SK-N-SH (cell line): ENCODE measurements at regions of chr9 and their contacts with region 1.

Region 1: GRCh38 chr9:136225748-136226679 is 19.6 kb downstream of the QSOX2 start:
- DNase-seq: peak; percentile 88
- H3K4me3 ChIP-seq: no peak overlapping the region; a peak in 1 of 4 replicates
- H3K27ac ChIP-seq: no peak overlapping the region
- H3K4me1 ChIP-seq: peaks cover 0 to 5% of the 10 kb centered on the region in 2 experiments; a peak in 1 of 4 replicates
- H3K27me3 ChIP-seq: no peaks in the 10 kb centered on the region
- CTCF ChIP-seq: peak; percentile 84
- EP300 ChIP-seq: no peak
- RAD21 ChIP-seq: peak; percentile 63

Region 2: GRCh38 chr9:136211441-136212344 is 14.3 kb before region 1 on chr9:
- CTCF ChIA-PET with region 1: interaction called, 50 read pairs
- POLR2A ChIA-PET with region 1: no interaction called
- DNase-seq: no peak
- H3K4me3 ChIP-seq: no peak overlapping the region
- H3K27ac ChIP-seq: no peak overlapping the region
- H3K4me1 ChIP-seq: peaks cover 0 to 6% of the 10 kb centered on the region in 2 experiments; a peak in 1 of 4 replicates
- H3K27me3 ChIP-seq: no peaks in the 10 kb centered on the region
- CTCF ChIP-seq: no peak
- EP300 ChIP-seq: no peak
- RAD21 ChIP-seq: no peak

Region 3: GRCh38 chr9:136244122-136244968 is 18.3 kb after region 1 on chr9:
- CTCF ChIA-PET with region 1: interaction called, 35 read pairs
- POLR2A ChIA-PET with region 1: no interaction called
- DNase-seq: no peak
- H3K4me3 ChIP-seq: peak overlapping the region; percentile 70 to 86
- H3K27ac ChIP-seq: no peak overlapping the region
- H3K4me1 ChIP-seq: peaks cover 8 to 32% of the 10 kb centered on the region in 2 experiments; a peak in 3 of 4 replicates
- H3K27me3 ChIP-seq: no peaks in the 10 kb centered on the region
- CTCF ChIP-seq: no peak
- EP300 ChIP-seq: no peak
- RAD21 ChIP-seq: no peak